Caco-2 (cell line): ENCODE measurements at regions of chr15 and their contacts with region 1.

Region 1: DNA sequence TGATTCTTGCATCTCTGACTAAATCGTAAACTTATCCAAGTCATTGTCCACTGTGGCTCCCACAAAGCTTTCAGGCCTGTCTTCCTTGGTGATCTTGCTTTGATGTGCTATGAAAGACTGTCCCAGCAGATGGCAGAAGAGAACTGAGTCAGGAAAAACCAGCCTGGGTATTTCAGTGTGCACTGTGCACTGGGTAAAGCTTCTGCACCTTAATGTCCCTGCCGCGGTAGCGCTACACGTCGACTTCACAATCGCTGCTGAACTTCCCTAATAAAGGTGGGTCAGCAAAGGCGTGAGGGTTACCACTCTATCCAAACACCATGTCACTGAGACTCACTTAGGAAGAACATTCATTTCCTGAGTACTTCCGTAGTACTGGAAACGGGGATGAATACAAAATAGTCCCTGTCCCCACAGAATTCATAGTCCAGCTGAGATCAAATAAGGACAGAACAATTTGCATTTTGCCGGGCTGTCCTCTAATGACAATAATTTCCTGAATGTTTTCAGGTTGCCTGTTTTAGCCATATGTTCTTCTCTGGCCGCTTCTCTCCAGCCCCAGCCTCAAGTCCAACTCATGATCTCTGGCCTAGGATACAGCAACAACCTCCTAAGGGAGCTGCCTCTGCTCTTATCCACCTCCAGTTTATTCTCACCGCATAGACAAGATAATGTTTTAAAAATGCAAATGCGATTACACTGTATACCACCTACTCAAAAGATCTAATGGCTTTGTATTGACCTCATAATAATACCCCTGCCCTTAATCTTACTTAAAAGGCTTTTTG is 83.6 kb upstream of the AKAP13 start:
- DNase-seq: peak; percentile 70 to 79
- H3K4me3 ChIP-seq: peak overlapping the region; percentile 10; the same call in 1 of the 2 replicates
- H3K4me3 Mint-ChIP-seq: peak overlapping the region; percentile 48
- H3K27ac Mint-ChIP-seq: peak overlapping the region; percentile 15
- H3K4me1 ChIP-seq: no peaks in the 10 kb centered on the region
- H3K4me1 Mint-ChIP-seq: peaks cover 7% of the 10 kb centered on the region
- H3K27me3 ChIP-seq: no peaks in the 10 kb centered on the region
- H3K27me3 Mint-ChIP-seq: peaks cover 2% of the 10 kb centered on the region
- CTCF ChIP-seq: peak; percentile 68 to 76

Region 2: DNA sequence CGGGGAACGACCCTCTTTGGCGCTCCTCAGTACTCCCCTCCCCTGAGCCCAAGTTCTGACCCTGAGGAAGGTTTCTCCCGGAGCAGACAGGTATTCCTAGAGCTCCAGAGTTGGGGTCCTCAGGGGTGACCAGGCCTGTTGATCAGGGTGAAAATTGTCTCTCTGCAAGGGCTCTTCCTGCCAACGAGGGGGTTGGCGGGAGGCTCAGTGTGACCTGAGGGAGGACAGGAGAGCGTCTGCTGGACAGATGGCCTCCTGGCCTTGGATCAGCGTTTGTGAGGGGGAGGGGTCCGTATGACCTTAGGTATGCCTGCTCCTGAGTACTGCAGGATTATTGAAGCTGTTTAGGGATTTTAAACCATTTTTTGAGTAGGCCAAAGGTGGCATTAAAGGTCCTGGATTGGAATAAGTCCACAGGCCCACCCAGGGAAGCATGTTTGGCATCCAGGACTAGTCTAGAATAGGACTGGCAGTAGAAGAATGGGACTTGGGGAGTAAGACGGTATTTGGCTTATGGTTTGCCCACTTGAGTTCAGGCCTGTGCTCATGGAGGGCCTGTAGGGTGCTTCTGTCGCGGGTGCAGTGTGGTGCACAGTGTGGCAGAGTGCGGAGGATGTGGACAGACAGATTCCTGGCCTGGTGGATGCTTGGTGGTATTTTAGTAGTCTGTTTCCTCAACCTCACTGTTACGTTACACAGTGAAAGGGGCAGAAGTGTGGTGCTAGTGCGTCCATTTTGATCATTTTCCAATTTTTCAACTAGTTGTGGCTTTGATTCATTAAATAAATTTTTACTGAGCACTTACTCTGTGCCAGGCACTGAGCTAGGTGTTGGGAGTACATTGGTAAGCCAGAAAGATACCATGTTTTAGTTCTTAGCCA is 547.5 kb before region 1 on chr15:
- CTCF ChIA-PET with region 1: no interaction called
- POLR2A ChIA-PET with region 1: no interaction called
- intact Hi-C with region 1: no loop called
- DNase-seq: peak; percentile 38
- H3K4me3 ChIP-seq: peak overlapping the region; percentile 89
- H3K4me3 Mint-ChIP-seq: peak overlapping the region; percentile 86
- H3K27ac Mint-ChIP-seq: peak overlapping the region; percentile 62
- H3K4me1 ChIP-seq: peaks cover 48% of the 10 kb centered on the region
- H3K4me1 Mint-ChIP-seq: peaks cover 34% of the 10 kb centered on the region
- H3K27me3 ChIP-seq: no peaks in the 10 kb centered on the region
- H3K27me3 Mint-ChIP-seq: no peaks in the 10 kb centered on the region
- CTCF ChIP-seq: no peak

Region 3: GRCh38 chr15:85306946-85307708 is 10.3 kb after region 1 on chr15:
- CTCF ChIA-PET with region 1: no interaction called
- POLR2A ChIA-PET with region 1: no interaction called
- intact Hi-C with region 1: no loop called
- DNase-seq: no peak
- H3K4me3 ChIP-seq: no peak overlapping the region
- H3K4me3 Mint-ChIP-seq: no peak overlapping the region
- H3K27ac Mint-ChIP-seq: no peak overlapping the region
- H3K4me1 ChIP-seq: no peaks in the 10 kb centered on the region
- H3K4me1 Mint-ChIP-seq: no peaks in the 10 kb centered on the region
- H3K27me3 ChIP-seq: no peaks in the 10 kb centered on the region
- H3K27me3 Mint-ChIP-seq: no peaks in the 10 kb centered on the region
- CTCF ChIP-seq: no peak

Region 4: DNA sequence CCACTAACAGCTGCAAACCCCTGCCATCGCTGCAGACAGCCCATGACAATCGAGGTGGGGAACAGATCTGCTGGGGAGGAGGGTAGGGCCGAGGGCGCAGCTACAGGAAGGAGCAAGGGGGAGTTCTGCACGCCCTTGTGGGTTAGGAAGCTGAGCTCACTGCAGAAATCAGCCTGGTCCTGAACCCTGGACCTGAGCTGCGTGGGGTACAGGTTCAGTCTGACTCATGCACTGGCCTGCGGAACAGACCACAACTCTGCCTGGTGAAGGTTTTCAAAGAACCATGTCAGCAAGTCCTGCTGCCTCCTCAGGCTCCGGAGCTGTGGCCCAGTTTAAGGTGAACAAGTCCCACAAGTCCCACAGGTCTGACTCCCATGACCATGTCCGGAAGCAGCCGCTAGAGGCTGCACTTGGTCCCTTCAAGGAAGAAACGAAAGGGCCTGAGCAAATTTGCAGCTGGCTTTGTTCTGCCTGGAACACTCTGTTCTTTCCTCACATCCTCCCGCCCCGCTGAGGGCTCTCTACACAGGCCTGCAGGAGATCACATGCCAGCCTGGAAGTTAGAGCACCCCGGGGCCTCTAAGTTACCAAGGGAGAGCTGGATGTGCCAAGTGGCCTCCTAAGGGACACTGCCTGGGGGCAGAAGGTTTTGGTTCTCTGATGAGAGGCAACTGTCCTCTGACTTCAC is 34.2 kb after region 1 on chr15:
- CTCF ChIA-PET with region 1: interaction called, 3 read pairs
- POLR2A ChIA-PET with region 1: no interaction called
- intact Hi-C with region 1: loop called (anchors 2 kb)
- DNase-seq: peak; percentile 77 to 82
- H3K4me3 ChIP-seq: no peak overlapping the region
- H3K4me3 Mint-ChIP-seq: no peak overlapping the region
- H3K27ac Mint-ChIP-seq: peak overlapping the region; percentile 81
- H3K4me1 ChIP-seq: peaks cover 47% of the 10 kb centered on the region
- H3K4me1 Mint-ChIP-seq: peaks cover 15% of the 10 kb centered on the region
- H3K27me3 ChIP-seq: no peaks in the 10 kb centered on the region
- H3K27me3 Mint-ChIP-seq: no peaks in the 10 kb centered on the region
- CTCF ChIP-seq: peak; percentile 42 to 61

Region 5: GRCh38 chr15:85412956-85413854 is 116.4 kb after region 1 on chr15:
- CTCF ChIA-PET with region 1: interaction called, 15 read pairs
- POLR2A ChIA-PET with region 1: no interaction called
- intact Hi-C with region 1: loop called (anchors 1 kb)
- DNase-seq: peak; percentile 48 to 53
- H3K4me3 ChIP-seq: no peak overlapping the region
- H3K4me3 Mint-ChIP-seq: peak overlapping the region; percentile 38
- H3K27ac Mint-ChIP-seq: peak overlapping the region; percentile 55
- H3K4me1 ChIP-seq: peaks cover 14% of the 10 kb centered on the region; the same call in 1 of the 2 replicates
- H3K4me1 Mint-ChIP-seq: peaks cover 26% of the 10 kb centered on the region
- H3K27me3 ChIP-seq: no peaks in the 10 kb centered on the region
- H3K27me3 Mint-ChIP-seq: no peaks in the 10 kb centered on the region
- CTCF ChIP-seq: no peak

Region 6: GRCh38 chr15:85504749-85505676 is 208.2 kb after region 1 on chr15:
- CTCF ChIA-PET with region 1: no interaction called
- POLR2A ChIA-PET with region 1: no interaction called
- intact Hi-C with region 1: loop called (anchors 1 kb)
- DNase-seq: peak in 1 of 2 experiments; percentile 56
- H3K4me3 ChIP-seq: no peak overlapping the region
- H3K4me3 Mint-ChIP-seq: no peak overlapping the region
- H3K27ac Mint-ChIP-seq: no peak overlapping the region
- H3K4me1 ChIP-seq: 0 out of 2 replicates have a peak, but pooled peaks cover 5% of the 10 kb centered on the region
- H3K4me1 Mint-ChIP-seq: peaks cover 16% of the 10 kb centered on the region
- H3K27me3 ChIP-seq: no peaks in the 10 kb centered on the region
- H3K27me3 Mint-ChIP-seq: no peaks in the 10 kb centered on the region
- CTCF ChIP-seq: peak; percentile 38 to 57